ENCODE measurements at regions of chr9 and their contacts with region 1.

Region 1: GRCh38 chr9:137295238-137295811 is 6.7 kb downstream of the NRARP start:
- DNase-seq: no peak
- H3K4me3 ChIP-seq: peak overlapping the region; percentile 31 to 51
- H3K27ac ChIP-seq: peak overlapping the region; percentile 72 to 94
- H3K4me1 ChIP-seq: peaks cover 12% of the 10 kb centered on the region
- H3K27me3 ChIP-seq: no peaks in the 10 kb centered on the region
- CTCF ChIP-seq: peak; percentile 42 to 93 (median 68)
- POLR2A ChIP-seq: no peak

Region 2: DNA sequence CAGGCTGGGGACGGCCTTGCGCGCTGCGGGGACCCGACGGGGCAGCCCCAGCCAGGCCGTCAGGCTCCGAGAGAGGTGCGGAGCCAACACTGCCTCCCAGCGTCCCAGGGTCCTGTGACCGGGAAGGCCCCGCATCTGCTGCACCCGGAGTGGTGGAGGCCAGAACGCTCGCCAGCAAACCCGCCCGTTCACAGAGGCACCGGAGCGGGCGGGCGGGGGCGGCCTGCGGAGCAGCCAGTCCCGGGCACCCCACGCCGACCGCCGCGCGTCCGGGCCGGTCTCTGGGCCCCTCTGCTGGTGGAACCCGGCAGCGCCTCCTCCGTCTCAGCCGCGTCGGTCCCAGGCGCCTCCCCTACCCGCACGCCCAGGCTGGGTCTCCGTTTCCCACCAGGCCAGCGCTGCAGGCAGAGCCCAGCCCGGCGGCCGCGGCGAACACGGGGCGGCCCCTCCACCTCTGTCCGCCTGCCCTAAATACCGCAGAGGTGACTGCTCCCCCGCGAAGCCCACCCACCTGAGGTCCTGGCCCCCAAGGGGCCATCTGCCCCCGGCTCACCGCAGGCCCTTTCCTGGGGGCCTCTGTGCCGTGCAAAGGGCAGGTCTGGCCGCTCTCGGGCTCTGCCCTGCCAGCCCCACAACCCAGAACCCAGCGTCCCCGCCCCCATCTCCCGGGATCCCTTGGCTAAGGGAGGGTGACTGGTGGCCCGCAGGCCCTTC is 111.7 kb after region 1 on chr9:
- intact Hi-C with region 1: loop called (anchors 10 kb)
- DNase-seq: peak; percentile 53
- H3K4me3 ChIP-seq: peak overlapping the region; percentile 20 to 24
- H3K27ac ChIP-seq: peak overlapping the region; percentile 42 to 48
- H3K4me1 ChIP-seq: no peaks in the 10 kb centered on the region
- H3K27me3 ChIP-seq: no peaks in the 10 kb centered on the region
- CTCF ChIP-seq: peak; percentile 64 to 96 (median 82)
- POLR2A ChIP-seq: no peak

Measured in prostate gland (tissue), 2 donors.